ENCODE measurements at regions of chr2 and their contacts with region 1.

Region 1: GRCh38 chr2:169095621-169096105 is 26.3 kb downstream of the DHRS9 start:
- DNase-seq: no peak
- ATAC-seq: no peak
- H3K4me3 Mint-ChIP-seq: peak overlapping the region; percentile 32
- H3K27ac Mint-ChIP-seq: no peak overlapping the region
- H3K4me1 Mint-ChIP-seq: peaks cover 35% of the 10 kb centered on the region
- H3K27me3 Mint-ChIP-seq: peaks cover 2% of the 10 kb centered on the region
- CTCF ChIP-seq: no peak

Region 2: GRCh38 chr2:169050478-169051240 is 45.0 kb before region 1 on chr2:
- CTCF ChIA-PET with region 1: no interaction called
- POLR2A ChIA-PET with region 1: no interaction called
- intact Hi-C with region 1: no loop called
- DNase-seq: no peak
- ATAC-seq: no peak
- H3K4me3 Mint-ChIP-seq: no peak overlapping the region
- H3K27ac Mint-ChIP-seq: no peak overlapping the region
- H3K4me1 Mint-ChIP-seq: no peaks in the 10 kb centered on the region
- H3K27me3 Mint-ChIP-seq: no peaks in the 10 kb centered on the region
- CTCF ChIP-seq: no peak

Region 3: DNA sequence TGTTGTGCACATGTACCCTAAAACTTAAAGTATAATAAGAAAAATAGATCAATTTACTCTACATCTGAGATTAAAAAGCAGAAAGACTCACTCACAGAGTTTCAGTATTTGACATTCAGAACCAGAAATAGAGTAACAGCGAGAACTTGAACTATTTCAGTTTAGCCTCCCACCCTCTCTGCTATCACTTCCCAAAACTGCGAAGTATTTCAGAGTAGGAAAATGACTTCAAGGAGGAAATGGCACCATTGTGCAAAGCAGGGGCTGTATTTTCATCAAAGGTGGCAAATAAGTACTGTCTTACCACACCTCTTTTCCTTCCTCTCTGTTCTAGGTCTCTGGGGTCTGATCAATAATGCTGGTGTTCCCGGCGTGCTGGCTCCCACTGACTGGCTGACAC is 12.7 kb before region 1 on chr2:
- CTCF ChIA-PET with region 1: no interaction called
- POLR2A ChIA-PET with region 1: no interaction called
- intact Hi-C with region 1: loop called (anchors 2 kb)
- DNase-seq: no peak
- ATAC-seq: no peak
- H3K4me3 Mint-ChIP-seq: peak overlapping the region; percentile 53
- H3K27ac Mint-ChIP-seq: peak overlapping the region; percentile 46
- H3K4me1 Mint-ChIP-seq: peaks cover 36% of the 10 kb centered on the region
- H3K27me3 Mint-ChIP-seq: no peaks in the 10 kb centered on the region
- CTCF ChIP-seq: no peak